SK-N-SH (cell line): ENCODE measurements at regions of chr7 and their contacts with region 1.

Region 1: GRCh38 chr7:101602484-101603241 is 26.4 kb downstream of the MYL10 start:
- DNase-seq: peak; percentile 94
- H3K4me3 ChIP-seq: no peak overlapping the region; a peak in 1 of 4 replicates
- H3K27ac ChIP-seq: no peak overlapping the region
- H3K4me1 ChIP-seq: peaks cover 0 to 11% of the 10 kb centered on the region in 2 experiments; a peak in 1 of 4 replicates
- H3K27me3 ChIP-seq: no peaks in the 10 kb centered on the region
- CTCF ChIP-seq: peak; percentile 99
- EP300 ChIP-seq: peak in 1 of 2 experiments; percentile 8; a peak in 1 of 4 replicates
- RAD21 ChIP-seq: peak; percentile 98

Region 2: DNA sequence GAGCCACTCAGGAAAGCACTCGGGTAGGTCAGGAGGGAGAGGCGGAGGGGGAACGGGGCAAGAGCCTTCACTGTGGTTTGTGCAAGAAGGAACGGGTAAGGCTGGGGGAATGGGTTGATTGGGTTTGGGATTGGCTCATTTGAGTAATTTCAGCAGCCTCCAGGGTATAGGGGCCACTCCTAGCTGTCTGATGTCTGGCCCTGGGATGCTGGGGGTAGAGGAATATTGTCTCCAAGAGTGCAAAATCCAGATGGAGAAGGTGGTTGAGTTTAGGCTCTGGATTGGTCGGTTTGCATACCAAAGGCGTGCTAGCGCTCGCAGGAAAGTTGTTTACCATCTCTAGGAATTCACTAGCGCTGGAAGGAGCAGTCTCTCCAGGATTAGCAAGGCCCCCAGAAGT is 20.8 kb before region 1 on chr7:
- CTCF ChIA-PET with region 1: interaction called, 47 read pairs
- POLR2A ChIA-PET with region 1: interaction called, 3 read pairs
- DNase-seq: no peak
- H3K4me3 ChIP-seq: no peak overlapping the region
- H3K27ac ChIP-seq: no peak overlapping the region
- H3K4me1 ChIP-seq: no peaks in the 10 kb centered on the region
- H3K27me3 ChIP-seq: no peaks in the 10 kb centered on the region; the same call in 1 of the 2 replicates
- CTCF ChIP-seq: no peak
- EP300 ChIP-seq: no peak
- RAD21 ChIP-seq: no peak

Region 3: DNA sequence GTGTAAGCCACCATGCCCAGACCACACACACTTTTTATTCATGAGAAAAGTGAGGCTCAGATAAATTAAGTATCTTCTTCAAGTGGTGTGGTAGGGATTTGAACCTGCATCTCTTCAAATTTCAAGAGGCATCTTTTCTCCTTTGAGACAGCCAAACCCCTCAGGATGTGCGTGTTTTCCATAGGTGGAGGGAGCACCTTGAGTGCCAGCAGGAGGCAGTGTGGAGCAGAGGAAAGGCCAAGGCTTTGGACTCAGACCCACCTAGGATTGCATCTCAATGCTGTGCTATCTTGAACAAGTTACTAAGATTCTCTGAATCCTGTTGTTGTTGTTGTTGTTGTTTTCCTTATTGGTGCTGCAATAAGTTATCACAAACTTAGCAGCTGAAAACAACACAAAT is 66.6 kb after region 1 on chr7:
- CTCF ChIA-PET with region 1: interaction called, 14 read pairs
- POLR2A ChIA-PET with region 1: no interaction called
- DNase-seq: no peak
- H3K4me3 ChIP-seq: no peak overlapping the region
- H3K27ac ChIP-seq: no peak overlapping the region
- H3K4me1 ChIP-seq: peaks cover 0 to 12% of the 10 kb centered on the region in 2 experiments; a peak in 1 of 4 replicates
- H3K27me3 ChIP-seq: no peaks in the 10 kb centered on the region
- CTCF ChIP-seq: peak; percentile 54
- EP300 ChIP-seq: no peak
- RAD21 ChIP-seq: no peak

Region 4: GRCh38 chr7:101743241-101743994 is 140.8 kb after region 1 on chr7:
- CTCF ChIA-PET with region 1: interaction called, 20 read pairs
- POLR2A ChIA-PET with region 1: no interaction called
- DNase-seq: peak; percentile 94
- H3K4me3 ChIP-seq: peak overlapping the region; percentile 54 to 90
- H3K27ac ChIP-seq: no peak overlapping the region
- H3K4me1 ChIP-seq: no peaks in the 10 kb centered on the region; a peak in 1 of 4 replicates
- H3K27me3 ChIP-seq: no peaks in the 10 kb centered on the region; the same call in 1 of the 2 replicates
- CTCF ChIP-seq: peak; percentile 86
- EP300 ChIP-seq: no peak; a peak in 2 of 4 replicates
- RAD21 ChIP-seq: peak; percentile 37

Region 5: GRCh38 chr7:102236592-102237287 is 634.1 kb after region 1 on chr7:
- CTCF ChIA-PET with region 1: interaction called, 25 read pairs
- POLR2A ChIA-PET with region 1: no interaction called
- DNase-seq: peak; percentile 95
- H3K4me3 ChIP-seq: no peak overlapping the region
- H3K27ac ChIP-seq: no peak overlapping the region; a peak in 1 of 4 replicates
- H3K4me1 ChIP-seq: peaks cover 0 to 2% of the 10 kb centered on the region in 2 experiments; a peak in 1 of 4 replicates
- H3K27me3 ChIP-seq: no peaks in the 10 kb centered on the region
- CTCF ChIP-seq: peak; percentile 97
- EP300 ChIP-seq: no peak
- RAD21 ChIP-seq: peak; percentile 99